ENCODE measurements at regions of chr7 and their contacts with region 1.

Region 1: GRCh38 chr7:35707422-35707821 is 12.5 kb upstream of the HERPUD2 start:
- DNase-seq: no peak
- H3K4me3 ChIP-seq: no peak overlapping the region
- H3K27ac ChIP-seq: no peak overlapping the region
- H3K4me1 ChIP-seq: peaks cover 0 to 9% (median 3%) of the 10 kb centered on the region in 4 donors
- H3K27me3 ChIP-seq: no peaks in the 10 kb centered on the region
- CTCF ChIP-seq: no peak
- EP300 ChIP-seq: no peak
- POLR2A ChIP-seq: no peak

Region 2: DNA sequence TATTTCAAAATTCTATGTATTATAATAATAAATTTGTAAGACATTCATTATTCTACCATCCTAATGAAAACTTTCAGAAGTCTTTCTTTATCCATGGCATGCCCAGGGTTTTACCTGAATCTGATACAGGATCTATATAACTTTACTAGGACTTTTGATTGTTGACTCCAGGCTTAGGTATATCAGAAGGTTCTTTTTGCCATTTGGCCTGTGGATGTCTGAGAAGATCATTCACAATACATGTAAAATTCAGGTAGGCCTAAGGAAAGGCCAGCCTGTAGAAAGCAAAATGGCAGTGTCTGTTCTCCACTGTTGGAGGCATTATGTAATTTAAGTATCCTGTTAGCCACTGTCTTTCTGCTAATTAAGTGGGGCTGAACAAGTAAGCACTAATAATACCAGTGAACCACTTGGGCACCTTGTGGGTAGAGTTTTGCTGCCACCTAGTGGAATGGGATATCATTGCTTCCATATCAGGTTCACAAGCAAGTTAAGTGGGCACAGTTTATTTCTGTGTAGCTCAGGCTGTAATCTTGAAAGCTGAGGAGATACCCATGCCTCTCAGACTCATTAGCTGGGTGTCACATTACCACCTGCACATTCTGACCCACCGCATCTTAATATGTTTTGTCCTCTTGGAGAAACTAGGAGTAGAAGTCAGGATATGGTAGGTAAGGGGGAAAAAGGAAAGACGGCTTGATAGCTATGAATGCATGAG is 198.9 kb after region 1 on chr7:
- intact Hi-C with region 1: loop called (anchors 2 kb)
- DNase-seq: peak; percentile 73
- H3K4me3 ChIP-seq: no peak overlapping the region
- H3K27ac ChIP-seq: peak overlapping the region in 2 of 4 donors; percentile 25 to 38
- H3K4me1 ChIP-seq: peaks cover 0 to 15% (median 10%) of the 10 kb centered on the region in 4 donors
- H3K27me3 ChIP-seq: no peaks in the 10 kb centered on the region
- CTCF ChIP-seq: peak; percentile 81 to 95 (median 88)
- EP300 ChIP-seq: no peak
- POLR2A ChIP-seq: no peak

Region 3: GRCh38 chr7:35975851-35976454 is 268.5 kb after region 1 on chr7:
- intact Hi-C with region 1: loop called (anchors 5 kb)
- DNase-seq: no peak
- H3K4me3 ChIP-seq: no peak overlapping the region
- H3K27ac ChIP-seq: no peak overlapping the region
- H3K4me1 ChIP-seq: peaks cover 0 to 6% (median 0%) of the 10 kb centered on the region in 4 donors
- H3K27me3 ChIP-seq: peaks cover 0 to 14% (median 0%) of the 10 kb centered on the region in 3 donors
- CTCF ChIP-seq: peak; percentile 27 to 84 (median 68)
- EP300 ChIP-seq: no peak
- POLR2A ChIP-seq: no peak

Region 4: GRCh38 chr7:37074370-37074769 is 1366.9 kb after region 1 on chr7:
- intact Hi-C with region 1: no loop called
- DNase-seq: no peak
- H3K4me3 ChIP-seq: no peak overlapping the region
- H3K27ac ChIP-seq: no peak overlapping the region
- H3K4me1 ChIP-seq: no peaks in the 10 kb centered on the region
- H3K27me3 ChIP-seq: no peaks in the 10 kb centered on the region
- CTCF ChIP-seq: no peak
- EP300 ChIP-seq: no peak
- POLR2A ChIP-seq: no peak

Measured in sigmoid colon (tissue), 7 donors.